Caco-2 (cell line): ENCODE measurements at regions of chr12 and their contacts with region 1.

Region 1: DNA sequence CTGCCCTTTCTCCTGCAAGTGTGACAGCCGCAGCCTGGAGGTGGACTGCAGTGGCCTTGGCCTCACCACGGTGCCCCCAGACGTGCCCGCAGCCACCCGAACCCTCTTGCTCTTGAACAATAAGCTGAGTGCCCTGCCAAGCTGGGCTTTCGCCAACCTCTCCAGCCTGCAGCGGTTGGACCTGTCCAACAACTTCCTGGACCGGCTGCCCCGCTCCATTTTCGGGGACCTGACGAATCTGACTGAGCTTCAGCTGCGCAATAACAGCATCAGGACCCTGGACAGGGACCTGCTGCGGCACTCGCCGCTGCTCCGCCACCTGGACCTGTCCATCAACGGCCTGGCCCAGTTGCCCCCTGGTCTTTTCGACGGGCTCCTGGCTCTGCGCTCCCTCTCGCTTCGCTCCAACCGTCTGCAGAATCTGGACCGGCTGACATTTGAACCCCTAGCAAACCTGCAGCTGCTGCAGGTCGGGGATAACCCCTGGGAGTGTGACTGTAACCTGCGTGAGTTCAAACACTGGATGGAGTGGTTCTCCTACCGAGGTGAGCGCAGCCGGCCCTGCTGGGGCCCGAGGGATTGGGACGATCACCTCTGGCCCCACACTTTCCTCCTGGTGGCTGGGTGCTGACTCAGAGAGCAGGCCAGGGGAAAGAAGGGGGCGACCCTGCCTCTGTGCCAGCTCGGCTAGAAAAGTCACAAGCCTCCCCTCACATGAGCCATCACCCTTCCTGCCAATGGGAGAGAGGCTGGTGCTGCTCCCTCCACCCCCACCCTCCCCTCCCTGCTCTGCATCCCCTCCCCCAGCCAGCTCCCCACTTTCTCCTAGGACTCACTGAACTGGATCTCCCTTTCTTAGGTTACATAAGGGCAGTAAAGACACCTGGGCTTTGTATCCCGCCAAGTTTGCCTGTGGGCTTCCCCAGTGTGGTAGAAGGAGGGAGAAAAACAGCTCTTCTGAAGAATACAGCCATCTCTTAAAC is 10.9 kb downstream of the LRTM2 start:
- DNase-seq: peak; percentile 87 to 94
- H3K4me3 ChIP-seq: no peak overlapping the region
- H3K4me3 Mint-ChIP-seq: no peak overlapping the region
- H3K27ac Mint-ChIP-seq: no peak overlapping the region
- H3K4me1 ChIP-seq: peaks cover 6% of the 10 kb centered on the region
- H3K4me1 Mint-ChIP-seq: peaks cover 8% of the 10 kb centered on the region
- H3K27me3 ChIP-seq: no peaks in the 10 kb centered on the region; the same call in none of the 2 replicates
- H3K27me3 Mint-ChIP-seq: peaks cover 26% of the 10 kb centered on the region
- CTCF ChIP-seq: no peak

Region 2: GRCh38 chr12:1812650-1813302 is 18.5 kb before region 1 on chr12:
- CTCF ChIA-PET with region 1: no interaction called
- POLR2A ChIA-PET with region 1: no interaction called
- intact Hi-C with region 1: loop called (anchors 2 kb)
- DNase-seq: peak in 1 of 2 experiments; percentile 51
- H3K4me3 ChIP-seq: no peak overlapping the region
- H3K4me3 Mint-ChIP-seq: no peak overlapping the region
- H3K27ac Mint-ChIP-seq: no peak overlapping the region
- H3K4me1 ChIP-seq: peaks cover 26% of the 10 kb centered on the region
- H3K4me1 Mint-ChIP-seq: peaks cover 13% of the 10 kb centered on the region
- H3K27me3 ChIP-seq: no peaks in the 10 kb centered on the region
- H3K27me3 Mint-ChIP-seq: no peaks in the 10 kb centered on the region
- CTCF ChIP-seq: no peak